Ovary (tissue), 10 donors: ENCODE measurements at regions of chr1 and their contacts with region 1.

Region 1: DNA sequence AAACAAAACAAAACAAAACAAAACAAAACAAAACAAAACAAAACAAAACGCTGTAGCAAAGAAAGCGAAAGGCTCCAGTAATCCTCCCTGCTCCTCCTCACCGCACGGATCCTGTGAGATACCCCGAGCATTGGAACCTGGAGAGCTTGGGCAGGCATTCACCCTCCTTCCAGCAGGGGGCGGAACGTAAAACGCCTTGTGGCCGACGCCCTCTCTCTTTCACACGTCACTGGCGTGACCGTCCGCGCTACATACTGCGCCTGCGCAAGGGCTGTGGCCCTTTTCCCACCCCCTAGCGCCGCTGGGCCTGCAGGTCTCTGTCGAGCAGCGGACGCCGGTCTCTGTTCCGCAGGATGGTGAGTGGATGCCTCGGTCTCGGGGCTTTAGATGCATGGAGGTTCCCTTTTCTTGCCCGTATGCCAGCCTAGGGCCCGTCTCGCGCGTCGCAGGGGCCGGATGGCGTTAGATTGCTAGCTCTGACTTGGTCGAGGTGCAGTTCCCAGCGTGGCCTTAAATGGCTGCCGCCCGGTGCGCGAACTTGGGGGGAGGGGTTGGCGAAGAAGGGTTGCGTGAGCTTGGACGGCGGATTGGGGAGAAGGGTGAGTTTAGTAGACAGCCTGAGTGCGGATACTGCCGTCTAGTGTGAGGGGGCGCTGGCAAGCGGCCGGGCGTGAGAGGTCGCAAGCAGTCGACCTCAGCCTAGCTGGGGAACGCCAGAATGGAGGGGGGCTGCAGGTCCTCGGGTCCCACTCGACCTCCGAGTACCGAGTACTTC is at the start of gene RPL5:
- DNase-seq: peak; percentile 96 to 98 (median 98)
- H3K4me3 ChIP-seq: peak within 1 kb of the TSS; percentile 86
- H3K27ac ChIP-seq: peak within 1 kb of the TSS; percentile 82 to 83
- H3K4me1 ChIP-seq: peaks cover 4% of the 10 kb centered on the region
- H3K27me3 ChIP-seq: no peaks in the 10 kb centered on the region
- CTCF ChIP-seq: peak; percentile 75 to 99 (median 98)
- EP300 ChIP-seq: peak; percentile 75
- POLR2A ChIP-seq: peak; percentile 96
- total RNA-seq, gene RPL5: 1,987 to 4,964 (median 2,752) TPM

Region 2: DNA sequence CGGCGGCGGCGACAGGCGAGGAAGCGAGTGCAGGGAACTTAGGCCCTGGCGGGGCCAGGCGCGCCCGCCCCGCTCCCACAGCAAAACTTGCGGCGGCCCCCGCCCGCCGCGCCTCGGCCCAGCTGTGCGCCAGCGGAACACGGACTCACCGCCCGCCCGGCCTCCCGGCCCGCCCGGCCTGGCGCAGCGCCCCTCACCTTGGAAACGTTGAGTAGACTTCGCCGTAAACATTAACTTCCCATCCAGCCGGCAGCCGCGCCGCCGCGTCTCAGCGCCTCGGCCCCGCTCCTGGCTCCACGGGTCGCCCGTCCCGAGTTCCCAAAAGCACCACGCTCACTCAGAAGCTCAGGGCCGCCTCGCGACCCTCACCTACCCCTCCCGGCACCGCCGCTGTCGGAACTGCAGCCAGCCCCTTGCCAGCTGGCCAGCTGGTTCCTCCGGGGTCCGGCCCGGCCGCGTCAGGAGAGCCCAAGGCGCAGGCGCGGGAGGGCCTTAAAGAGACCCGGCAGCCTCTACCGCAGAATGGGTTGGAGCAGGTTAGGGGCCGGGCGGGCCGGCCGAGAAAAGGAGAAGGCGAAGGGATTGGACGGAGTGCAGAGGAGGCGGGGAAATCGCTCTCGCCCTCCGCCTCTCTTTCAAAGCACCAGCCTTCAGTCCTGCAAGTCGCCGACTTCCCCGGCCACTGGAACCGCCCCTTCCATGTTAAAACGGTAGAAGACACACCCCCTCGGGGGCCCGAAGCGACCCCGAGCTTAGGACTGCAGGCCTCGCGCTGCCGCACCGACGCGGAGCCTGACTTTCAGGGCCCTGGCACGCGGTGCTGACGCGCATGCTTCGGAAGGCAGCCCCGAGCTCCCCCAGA is 47.1 kb before region 1 on chr1 and contains the start of gene EVI5:
- intact Hi-C with region 1: loop called in 1 of 4 experiments (anchors 2 kb)
- DNase-seq: peak; percentile 91 to 96 (median 94)
- H3K4me3 ChIP-seq: peak within 1 kb of the TSS; percentile 94
- H3K27ac ChIP-seq: peak within 1 kb of the TSS; percentile 55 to 95
- H3K4me1 ChIP-seq: no peaks in the 10 kb centered on the region
- H3K27me3 ChIP-seq: no peaks in the 10 kb centered on the region
- CTCF ChIP-seq: no peak
- EP300 ChIP-seq: no peak
- POLR2A ChIP-seq: peak; percentile 88
- total RNA-seq, gene EVI5: 14.8 to 36.7 (median 30.7) TPM